HepG2 (cell line): ENCODE measurements at regions of chr12 and their contacts with region 1.

Region 1: DNA sequence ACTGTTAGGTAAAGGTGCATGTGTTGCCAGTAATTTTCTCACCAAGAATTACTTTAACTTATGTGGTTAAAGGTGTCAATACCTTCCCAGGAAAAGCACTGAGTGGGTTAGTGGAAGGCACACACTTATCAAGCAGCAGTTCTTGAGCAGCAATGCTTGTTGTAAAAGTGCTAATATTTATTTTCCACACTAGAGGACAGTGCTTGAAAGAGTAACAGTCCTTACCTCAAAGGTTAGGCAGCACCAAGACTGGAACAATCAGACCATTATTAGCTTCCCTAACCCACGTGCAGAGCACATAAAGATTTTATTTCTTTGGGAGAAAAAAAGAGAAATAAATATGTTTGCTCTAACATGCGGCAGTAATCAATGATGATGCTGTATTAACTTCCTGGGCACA is 48.8 kb upstream of the KRR1 start:
- DNase-seq: peak; percentile 68
- ATAC-seq: peak; percentile 87
- H3K4me3 ChIP-seq: no peak overlapping the region
- H3K27ac ChIP-seq: no peak overlapping the region
- H3K4me1 ChIP-seq: peaks cover 55% of the 10 kb centered on the region
- H3K27me3 ChIP-seq: no peaks in the 10 kb centered on the region
- CTCF ChIP-seq: peak; percentile 83
- EP300 ChIP-seq: no peak
- POLR2A ChIP-seq: no peak
- RAD21 ChIP-seq: peak; percentile 58; the same call in 1 of the 2 replicates

Region 2: GRCh38 chr12:75606934-75607333 is 46.8 kb after region 1 on chr12:
- CTCF ChIA-PET with region 1: no interaction called
- POLR2A ChIA-PET with region 1: no interaction called
- in situ Hi-C with region 1: no loop called
- intact Hi-C with region 1: loop called (anchors 1 kb)
- DNase-seq: no peak
- ATAC-seq: no peak
- H3K4me3 ChIP-seq: no peak overlapping the region
- H3K27ac ChIP-seq: no peak overlapping the region
- H3K4me1 ChIP-seq: no peaks in the 10 kb centered on the region
- H3K27me3 ChIP-seq: no peaks in the 10 kb centered on the region
- CTCF ChIP-seq: no peak
- EP300 ChIP-seq: no peak
- POLR2A ChIP-seq: no peak
- RAD21 ChIP-seq: no peak

Region 3: DNA sequence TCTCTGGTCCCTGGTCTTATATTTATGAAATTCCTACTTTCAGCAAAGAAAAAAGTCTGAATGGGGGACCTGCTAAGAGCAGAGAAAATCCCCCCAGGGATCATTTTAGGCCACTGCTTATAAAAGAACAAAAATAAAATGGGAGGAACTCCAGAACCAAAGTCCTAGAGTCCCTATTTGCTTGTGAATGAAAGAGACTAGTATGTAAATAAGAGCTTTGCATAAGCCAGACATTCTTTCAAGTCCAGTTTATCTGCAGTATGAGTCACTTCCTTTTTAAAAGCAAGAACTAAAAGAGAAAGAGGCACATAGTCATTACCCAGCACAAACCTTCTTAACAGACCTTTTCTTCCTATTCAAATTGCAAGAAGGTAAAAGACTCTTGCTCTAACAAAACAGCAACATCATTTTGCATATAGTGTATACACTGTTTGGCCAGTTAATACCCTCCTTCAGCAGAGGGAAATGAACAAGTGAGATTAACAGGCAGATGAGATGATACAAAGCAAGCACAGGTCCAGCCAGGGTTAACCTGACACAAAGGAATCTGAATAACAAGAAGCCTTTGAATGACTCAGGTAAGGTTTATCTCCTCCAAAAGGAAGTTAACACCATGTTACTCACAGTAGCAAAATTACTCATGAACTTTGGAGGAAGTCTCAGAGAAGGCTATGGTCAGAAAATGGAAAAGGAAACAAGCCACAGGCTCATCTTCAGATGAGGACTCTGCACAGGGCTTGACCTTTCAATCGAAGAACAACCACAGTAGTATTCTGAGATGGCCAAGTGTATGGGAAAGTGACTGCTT is 384.1 kb after region 1 on chr12:
- CTCF ChIA-PET with region 1: no interaction called
- POLR2A ChIA-PET with region 1: interaction called, 3 read pairs
- in situ Hi-C with region 1: no loop called
- intact Hi-C with region 1: loop called (anchors 1 kb)
- DNase-seq: peak; percentile 97
- ATAC-seq: peak; percentile 96
- H3K4me3 ChIP-seq: peak overlapping the region in 2 of 3 experiments; percentile 1 to 32; a peak in 2 of 6 replicates
- H3K27ac ChIP-seq: peak overlapping the region; percentile 96
- H3K4me1 ChIP-seq: peaks cover 54% of the 10 kb centered on the region
- H3K27me3 ChIP-seq: no peaks in the 10 kb centered on the region
- CTCF ChIP-seq: no peak
- EP300 ChIP-seq: peak; percentile 97 to 99
- POLR2A ChIP-seq: no peak; a peak in 1 of 4 replicates
- RAD21 ChIP-seq: no peak

Region 4: GRCh38 chr12:75994186-75994731 is 434.1 kb after region 1 on chr12:
- CTCF ChIA-PET with region 1: no interaction called
- POLR2A ChIA-PET with region 1: no interaction called
- in situ Hi-C with region 1: no loop called
- intact Hi-C with region 1: loop called (anchors 1 kb)
- DNase-seq: no peak
- ATAC-seq: no peak
- H3K4me3 ChIP-seq: no peak overlapping the region
- H3K27ac ChIP-seq: no peak overlapping the region
- H3K4me1 ChIP-seq: peaks cover 44% of the 10 kb centered on the region
- H3K27me3 ChIP-seq: no peaks in the 10 kb centered on the region
- CTCF ChIP-seq: no peak
- EP300 ChIP-seq: no peak
- POLR2A ChIP-seq: no peak
- RAD21 ChIP-seq: no peak

Region 5: GRCh38 chr12:76037130-76038103 is 477.2 kb after region 1 on chr12:
- CTCF ChIA-PET with region 1: interaction called, 3 read pairs
- POLR2A ChIA-PET with region 1: interaction called, 16 read pairs
- in situ Hi-C with region 1: no loop called
- intact Hi-C with region 1: loop called (anchors 1 kb)
- DNase-seq: peak; percentile 77
- ATAC-seq: peak; percentile 44
- H3K4me3 ChIP-seq: no peak overlapping the region
- H3K27ac ChIP-seq: no peak overlapping the region
- H3K4me1 ChIP-seq: peaks cover 74% of the 10 kb centered on the region
- H3K27me3 ChIP-seq: no peaks in the 10 kb centered on the region; a peak in 1 of 5 replicates
- CTCF ChIP-seq: peak; percentile 83
- EP300 ChIP-seq: no peak
- POLR2A ChIP-seq: no peak
- RAD21 ChIP-seq: peak; percentile 87